Activated naive CD4-positive, alpha-beta T cell treated with anti-CD3 and anti-CD28 coated beads for 36 hours (primary cell): ENCODE measurements at regions of chr12 and their contacts with region 1.

Region 1: GRCh38 chr12:11648831-11649702 is at the start of gene ETV6:
- DNase-seq: peak; percentile 90
- H3K4me3 Mint-ChIP-seq: peak within 1 kb of the TSS; percentile 98
- H3K27ac Mint-ChIP-seq: peak within 1 kb of the TSS; percentile 99
- H3K4me1 Mint-ChIP-seq: peaks cover 27% of the 10 kb centered on the region
- H3K27me3 Mint-ChIP-seq: no peaks in the 10 kb centered on the region
- total RNA-seq, gene ETV6: 48.1 to 48.6 TPM

Region 2: DNA sequence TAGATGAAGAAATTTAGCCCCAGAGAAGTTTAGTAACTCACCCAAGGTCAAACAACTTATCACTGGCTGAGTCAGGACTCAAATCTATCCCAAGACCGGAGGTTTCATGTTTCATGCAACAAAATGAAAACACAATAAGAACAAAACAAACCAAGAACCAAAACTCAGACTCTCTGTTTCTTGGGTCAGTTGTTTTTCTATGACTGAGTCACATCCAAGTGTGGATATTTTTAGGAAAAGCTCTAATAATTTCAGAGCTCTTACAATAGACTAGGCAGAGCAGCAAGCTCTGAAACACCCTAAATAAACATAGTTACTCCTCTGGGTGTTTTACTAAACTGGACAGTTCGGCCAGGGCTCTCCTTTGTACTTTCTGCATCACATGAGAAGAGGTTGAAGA is 166.1 kb before region 1 on chr12:
- CTCF ChIA-PET with region 1: no interaction called
- intact Hi-C with region 1: no loop called
- DNase-seq: no peak
- H3K4me3 Mint-ChIP-seq: no peak overlapping the region
- H3K27ac Mint-ChIP-seq: no peak overlapping the region
- H3K4me1 Mint-ChIP-seq: peaks cover 4% of the 10 kb centered on the region
- H3K27me3 Mint-ChIP-seq: no peaks in the 10 kb centered on the region

Region 3: DNA sequence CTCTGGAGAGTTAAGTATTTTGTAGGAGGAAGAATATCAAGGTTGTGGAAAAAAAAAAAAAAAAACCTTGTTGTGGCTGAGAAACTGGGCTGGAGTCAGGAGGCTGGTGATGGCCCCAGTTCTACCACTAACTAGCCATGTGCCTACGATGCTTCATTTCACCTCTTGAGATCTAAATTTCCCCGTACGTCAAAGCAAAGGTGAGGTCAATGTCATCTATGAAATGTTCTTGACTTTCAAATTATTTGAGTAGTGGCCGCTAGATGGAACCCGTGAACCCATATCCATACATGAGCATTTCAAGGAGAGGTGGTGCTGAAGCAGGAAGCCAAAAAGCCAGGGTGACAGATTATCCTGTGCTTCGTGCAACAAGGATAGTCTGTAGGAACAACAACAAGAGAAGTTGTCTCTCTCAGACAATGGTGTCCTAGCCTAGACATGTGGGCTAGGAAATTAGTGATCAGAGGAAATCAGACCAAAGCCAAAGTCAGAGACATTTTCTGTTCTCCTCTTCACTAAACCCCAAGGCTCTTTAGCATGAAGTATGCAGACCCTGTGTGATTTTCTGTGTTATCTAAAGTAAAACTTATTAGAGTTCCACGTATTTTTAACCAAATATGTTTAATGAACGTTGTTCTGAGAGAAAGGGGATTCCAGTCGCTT is 95.1 kb before region 1 on chr12:
- CTCF ChIA-PET with region 1: interaction called, 3 read pairs
- intact Hi-C with region 1: loop called (anchors 2 kb)
- DNase-seq: peak; percentile 79
- H3K4me3 Mint-ChIP-seq: no peak overlapping the region
- H3K27ac Mint-ChIP-seq: no peak overlapping the region
- H3K4me1 Mint-ChIP-seq: peaks cover 22% of the 10 kb centered on the region
- H3K27me3 Mint-ChIP-seq: no peaks in the 10 kb centered on the region

Region 4: GRCh38 chr12:11724888-11725311 is 75.8 kb after region 1 on chr12:
- CTCF ChIA-PET with region 1: no interaction called
- intact Hi-C with region 1: loop called (anchors 1 kb)
- DNase-seq: no peak
- H3K4me3 Mint-ChIP-seq: no peak overlapping the region
- H3K27ac Mint-ChIP-seq: no peak overlapping the region
- H3K4me1 Mint-ChIP-seq: peaks cover 50% of the 10 kb centered on the region
- H3K27me3 Mint-ChIP-seq: no peaks in the 10 kb centered on the region

Region 5: DNA sequence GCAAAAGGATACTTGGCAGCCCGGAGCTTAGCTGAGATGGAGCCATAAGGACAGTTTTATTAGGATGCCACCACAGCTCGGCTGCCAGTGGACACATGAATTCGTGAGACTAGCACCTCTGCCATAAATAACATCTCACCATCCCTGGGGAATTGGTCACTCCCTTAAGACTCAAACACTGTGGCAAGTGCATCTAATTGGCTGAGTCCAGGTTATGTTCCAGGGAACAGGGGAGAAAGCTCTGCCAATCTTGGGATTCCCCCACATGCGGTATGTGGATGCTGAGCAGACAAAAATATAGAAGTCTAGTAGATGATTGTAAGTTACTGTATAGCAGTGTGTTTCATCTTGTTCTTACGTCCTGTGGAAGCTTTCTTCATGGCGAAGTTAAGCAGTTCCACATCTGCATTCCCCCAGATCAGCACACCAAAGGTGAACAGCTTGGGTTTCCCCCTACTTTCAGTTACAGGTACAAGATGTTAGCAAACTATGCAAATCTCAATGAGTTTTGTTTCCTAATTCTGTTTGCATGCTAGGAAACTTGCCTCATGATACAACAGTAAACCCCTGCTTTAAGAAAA is 131.5 kb after region 1 on chr12:
- CTCF ChIA-PET with region 1: interaction called, 4 read pairs
- intact Hi-C with region 1: loop called (anchors 1 kb)
- DNase-seq: peak; percentile 68
- H3K4me3 Mint-ChIP-seq: peak overlapping the region; percentile 2
- H3K27ac Mint-ChIP-seq: peak overlapping the region; percentile 85
- H3K4me1 Mint-ChIP-seq: peaks cover 74% of the 10 kb centered on the region
- H3K27me3 Mint-ChIP-seq: no peaks in the 10 kb centered on the region

Region 6: GRCh38 chr12:11877869-11878780 is 229.1 kb after region 1 on chr12:
- CTCF ChIA-PET with region 1: no interaction called
- intact Hi-C with region 1: loop called (anchors 1 kb)
- DNase-seq: peak; percentile 26
- H3K4me3 Mint-ChIP-seq: no peak overlapping the region
- H3K27ac Mint-ChIP-seq: no peak overlapping the region
- H3K4me1 Mint-ChIP-seq: peaks cover 47% of the 10 kb centered on the region
- H3K27me3 Mint-ChIP-seq: no peaks in the 10 kb centered on the region

Region 7: DNA sequence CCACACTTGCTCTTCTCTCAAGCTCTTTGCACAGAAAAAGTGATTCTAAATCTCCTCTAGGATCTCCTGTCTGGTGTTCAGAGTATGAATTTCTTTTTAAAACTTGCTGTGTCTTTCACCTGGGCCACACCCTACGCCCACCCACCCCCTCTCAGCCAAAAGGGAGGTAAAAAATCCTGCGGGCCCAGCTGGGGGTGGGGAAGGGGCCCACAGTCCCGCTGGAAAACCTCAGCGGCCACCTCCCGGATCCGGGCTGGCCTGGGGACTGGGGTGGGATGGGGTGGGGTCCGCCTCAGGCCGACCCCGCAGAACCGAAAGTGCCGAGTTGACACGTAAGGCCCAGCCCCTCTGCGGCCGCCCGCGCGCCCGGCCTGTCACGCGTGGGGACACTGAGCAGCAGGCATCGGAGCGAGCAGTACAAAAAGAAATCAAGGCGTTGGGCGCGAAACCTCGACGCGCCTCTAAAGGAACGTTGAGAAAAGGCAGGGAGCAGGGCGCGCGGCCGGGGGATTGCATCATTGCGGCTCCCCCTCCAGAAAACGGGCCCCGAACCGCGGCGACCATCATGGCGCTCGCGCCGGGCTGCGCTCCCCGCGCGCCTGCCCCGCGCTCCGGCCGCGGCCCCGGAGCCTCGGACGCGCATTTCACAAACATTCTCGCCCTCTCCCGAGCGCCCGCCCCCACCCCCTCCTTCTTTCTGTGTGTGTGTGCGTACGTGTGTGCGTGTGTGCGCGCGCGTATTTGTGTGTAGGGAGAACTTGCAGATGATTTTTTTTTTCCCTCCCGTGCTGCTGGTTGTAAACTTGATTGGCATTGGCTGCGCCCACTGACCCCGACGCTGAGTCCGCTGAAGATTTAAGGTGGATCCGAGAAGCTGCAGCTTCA is 1075.8 kb after region 1 on chr12:
- CTCF ChIA-PET with region 1: no interaction called
- intact Hi-C with region 1: loop called (anchors 2 kb)
- DNase-seq: peak; percentile 94
- H3K4me3 Mint-ChIP-seq: peak overlapping the region; percentile 85
- H3K27ac Mint-ChIP-seq: peak overlapping the region; percentile 98
- H3K4me1 Mint-ChIP-seq: peaks cover 51% of the 10 kb centered on the region
- H3K27me3 Mint-ChIP-seq: no peaks in the 10 kb centered on the region